ENCODE measurements at regions of chr20 and their contacts with region 1.

Region 1: GRCh38 chr20:59455402-59456341 is 148.7 kb upstream of the PHACTR3 start:
- DNase-seq: peak; percentile 39 to 70 (median 58)
- H3K4me3 ChIP-seq: no peak overlapping the region
- H3K27ac ChIP-seq: no peak overlapping the region
- H3K4me1 ChIP-seq: no peaks in the 10 kb centered on the region
- H3K27me3 ChIP-seq: no peaks in the 10 kb centered on the region
- CTCF ChIP-seq: peak; percentile 46 to 74 (median 59)
- POLR2A ChIP-seq: no peak

Region 2: GRCh38 chr20:59087829-59088433 is 367.7 kb before region 1 on chr20:
- intact Hi-C with region 1: loop called in 1 of 2 experiments (anchors 5 kb)
- DNase-seq: peak; percentile 72 to 93 (median 81)
- H3K4me3 ChIP-seq: no peak overlapping the region
- H3K27ac ChIP-seq: no peak overlapping the region
- H3K4me1 ChIP-seq: no peaks in the 10 kb centered on the region
- H3K27me3 ChIP-seq: no peaks in the 10 kb centered on the region
- CTCF ChIP-seq: peak; percentile 63 to 95 (median 82)
- POLR2A ChIP-seq: no peak

Region 3: GRCh38 chr20:59173938-59174496 is 281.7 kb before region 1 on chr20:
- intact Hi-C with region 1: no loop called
- DNase-seq: no peak
- H3K4me3 ChIP-seq: no peak overlapping the region
- H3K27ac ChIP-seq: no peak overlapping the region
- H3K4me1 ChIP-seq: no peaks in the 10 kb centered on the region
- H3K27me3 ChIP-seq: peaks cover 6% of the 10 kb centered on the region
- CTCF ChIP-seq: no peak
- POLR2A ChIP-seq: no peak

Region 4: GRCh38 chr20:59184880-59185447 is 270.7 kb before region 1 on chr20:
- intact Hi-C with region 1: no loop called
- DNase-seq: no peak
- H3K4me3 ChIP-seq: no peak overlapping the region
- H3K27ac ChIP-seq: no peak overlapping the region
- H3K4me1 ChIP-seq: no peaks in the 10 kb centered on the region
- H3K27me3 ChIP-seq: no peaks in the 10 kb centered on the region
- CTCF ChIP-seq: no peak
- POLR2A ChIP-seq: no peak

Measured in adrenal gland (tissue), 19 donors.